CD14-positive monocyte (primary cell): ENCODE measurements at regions of chr10 and their contacts with region 1.

Region 1: GRCh38 chr10:60964257-60965235 is 20.6 kb upstream of the RHOBTB1 start:
- DNase-seq: peak; percentile 31 to 51 (median 48)
- H3K4me3 ChIP-seq: no peak overlapping the region
- H3K4me3 Mint-ChIP-seq: no peak overlapping the region
- H3K27ac ChIP-seq: no peak overlapping the region
- H3K27ac Mint-ChIP-seq: no peak overlapping the region
- H3K4me1 ChIP-seq: no peaks in the 10 kb centered on the region
- H3K4me1 Mint-ChIP-seq: peaks cover 7% of the 10 kb centered on the region
- H3K27me3 ChIP-seq: no peaks in the 10 kb centered on the region
- H3K27me3 Mint-ChIP-seq: peaks cover 0 to 3% (median 3%) of the 10 kb centered on the region in 3 donors
- CTCF ChIP-seq: peak; percentile 87

Region 2: DNA sequence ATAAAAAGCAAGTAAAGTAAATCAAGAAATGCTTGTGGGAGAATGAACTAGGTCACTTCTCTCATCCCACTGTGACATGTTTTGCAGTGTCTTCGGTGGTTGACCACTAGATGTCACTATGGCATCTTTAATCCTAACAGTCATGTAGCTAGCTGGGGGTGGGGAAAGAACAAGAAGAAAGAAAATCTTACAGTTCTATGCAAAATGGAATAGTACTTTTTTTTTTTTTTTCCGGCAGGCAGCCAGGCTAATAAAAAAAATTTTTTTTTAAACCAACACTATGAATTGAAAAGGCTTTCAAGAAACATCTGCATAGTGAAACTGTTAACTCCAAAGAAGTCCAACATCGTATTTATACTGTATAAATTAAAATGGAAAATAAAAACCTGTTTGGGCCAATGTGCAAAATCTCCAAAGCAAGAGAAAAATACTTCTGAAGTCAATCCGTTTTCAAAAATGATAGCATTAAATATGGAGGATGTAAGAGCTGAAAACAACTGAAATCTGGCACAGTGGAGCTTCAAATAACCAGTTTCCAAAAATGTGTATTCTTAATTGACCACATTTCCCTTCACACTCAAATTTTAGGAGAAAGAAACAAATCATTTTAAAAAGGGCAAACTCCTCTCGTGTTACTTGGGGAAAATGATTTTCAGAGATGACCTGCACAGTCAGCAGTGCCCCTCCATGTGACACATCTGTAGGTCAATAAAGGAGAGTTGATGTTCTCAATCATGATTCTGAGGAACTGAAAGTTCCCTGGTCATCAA is 147.7 kb before region 1 on chr10:
- intact Hi-C with region 1: loop called (anchors 5 to 10 kb)
- DNase-seq: peak; percentile 47 to 65 (median 62)
- H3K4me3 ChIP-seq: no peak overlapping the region
- H3K4me3 Mint-ChIP-seq: no peak overlapping the region
- H3K27ac ChIP-seq: no peak overlapping the region
- H3K27ac Mint-ChIP-seq: no peak overlapping the region
- H3K4me1 ChIP-seq: no peaks in the 10 kb centered on the region
- H3K4me1 Mint-ChIP-seq: peaks cover 4% of the 10 kb centered on the region
- H3K27me3 ChIP-seq: no peaks in the 10 kb centered on the region
- H3K27me3 Mint-ChIP-seq: peaks cover 0 to 4% (median 0%) of the 10 kb centered on the region in 3 donors
- CTCF ChIP-seq: peak; percentile 84

Region 3: GRCh38 chr10:60892571-60892970 is 72.0 kb before region 1 on chr10:
- intact Hi-C with region 1: no loop called
- DNase-seq: no peak
- H3K4me3 ChIP-seq: no peak overlapping the region
- H3K4me3 Mint-ChIP-seq: no peak overlapping the region
- H3K27ac ChIP-seq: no peak overlapping the region
- H3K27ac Mint-ChIP-seq: no peak overlapping the region
- H3K4me1 ChIP-seq: no peaks in the 10 kb centered on the region
- H3K4me1 Mint-ChIP-seq: no peaks in the 10 kb centered on the region
- H3K27me3 ChIP-seq: no peaks in the 10 kb centered on the region
- H3K27me3 Mint-ChIP-seq: no peaks in the 10 kb centered on the region
- CTCF ChIP-seq: no peak